HepG2 (cell line): ENCODE measurements at regions of chr3 and their contacts with region 1.

Region 1: DNA sequence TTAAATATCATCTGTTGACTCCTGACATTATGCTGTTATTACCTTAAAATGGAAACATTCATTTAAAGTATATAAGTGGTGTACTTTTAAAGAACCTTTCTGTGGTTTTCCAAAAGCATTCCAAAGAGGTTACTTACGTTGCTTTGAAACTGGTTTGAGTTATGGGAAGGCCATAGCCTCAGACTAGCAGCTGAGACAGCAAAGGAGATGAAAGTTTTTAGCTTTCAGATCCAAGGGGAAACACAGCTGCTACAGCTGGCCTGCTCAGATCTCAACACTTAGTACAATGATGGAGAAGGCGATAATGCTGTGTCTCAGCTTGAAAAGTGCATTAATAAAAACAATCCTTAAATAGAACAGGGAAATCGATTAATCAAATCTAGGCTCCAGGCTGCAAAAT is 921.1 kb downstream of the ROBO1 start:
- DNase-seq: no peak
- ATAC-seq: no peak
- H3K4me3 ChIP-seq: no peak overlapping the region
- H3K27ac ChIP-seq: peak overlapping the region; percentile 90
- H3K4me1 ChIP-seq: peaks cover 85% of the 10 kb centered on the region
- H3K27me3 ChIP-seq: no peaks in the 10 kb centered on the region
- CTCF ChIP-seq: no peak
- EP300 ChIP-seq: no peak; a peak in 1 of 4 replicates
- POLR2A ChIP-seq: no peak
- RAD21 ChIP-seq: no peak

Region 2: DNA sequence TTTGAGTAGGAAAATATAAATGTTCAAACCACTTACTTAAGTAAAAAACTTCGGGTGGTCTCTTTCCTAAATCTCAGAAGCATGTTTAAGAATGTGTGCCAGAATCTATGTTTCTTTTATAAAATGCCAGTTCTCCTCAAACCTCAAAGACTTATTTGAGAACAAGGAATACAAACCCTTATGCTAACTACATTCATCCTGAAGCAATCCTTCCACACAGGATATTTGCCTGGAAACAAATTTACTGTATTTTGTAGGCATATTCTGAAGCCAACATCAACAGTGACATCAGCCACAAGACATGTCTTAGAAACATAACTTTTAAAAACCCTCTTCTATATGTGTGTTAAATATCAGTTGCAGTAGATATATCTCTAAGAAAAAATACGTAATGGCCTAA is 156.0 kb before region 1 on chr3:
- CTCF ChIA-PET with region 1: no interaction called
- POLR2A ChIA-PET with region 1: no interaction called
- in situ Hi-C with region 1: no loop called
- intact Hi-C with region 1: no loop called
- DNase-seq: no peak
- ATAC-seq: no peak
- H3K4me3 ChIP-seq: no peak overlapping the region
- H3K27ac ChIP-seq: no peak overlapping the region
- H3K4me1 ChIP-seq: no peaks in the 10 kb centered on the region
- H3K27me3 ChIP-seq: no peaks in the 10 kb centered on the region
- CTCF ChIP-seq: no peak
- EP300 ChIP-seq: no peak
- POLR2A ChIP-seq: no peak
- RAD21 ChIP-seq: no peak

Region 3: GRCh38 chr3:78754066-78754743 is 92.5 kb before region 1 on chr3:
- CTCF ChIA-PET with region 1: no interaction called
- POLR2A ChIA-PET with region 1: no interaction called
- in situ Hi-C with region 1: no loop called
- intact Hi-C with region 1: loop called (anchors 5 kb)
- DNase-seq: peak; percentile 84
- ATAC-seq: peak; percentile 87
- H3K4me3 ChIP-seq: no peak overlapping the region; a peak in 1 of 6 replicates
- H3K27ac ChIP-seq: peak overlapping the region; percentile 23
- H3K4me1 ChIP-seq: peaks cover 26% of the 10 kb centered on the region
- H3K27me3 ChIP-seq: no peaks in the 10 kb centered on the region
- CTCF ChIP-seq: no peak
- EP300 ChIP-seq: no peak; a peak in 1 of 4 replicates
- POLR2A ChIP-seq: no peak
- RAD21 ChIP-seq: no peak

Region 4: GRCh38 chr3:78872195-78872594 is 25.5 kb after region 1 on chr3:
- CTCF ChIA-PET with region 1: no interaction called
- POLR2A ChIA-PET with region 1: interaction called, 12 read pairs
- in situ Hi-C with region 1: no loop called
- intact Hi-C with region 1: no loop called
- DNase-seq: peak; percentile 89
- ATAC-seq: peak; percentile 92
- H3K4me3 ChIP-seq: peak overlapping the region in 2 of 3 experiments; percentile 31 to 32; a peak in 2 of 6 replicates
- H3K27ac ChIP-seq: peak overlapping the region; percentile 72
- H3K4me1 ChIP-seq: peaks cover 83% of the 10 kb centered on the region
- H3K27me3 ChIP-seq: no peaks in the 10 kb centered on the region
- CTCF ChIP-seq: no peak
- EP300 ChIP-seq: peak in 1 of 2 experiments; percentile 82; a peak in 2 of 4 replicates
- POLR2A ChIP-seq: no peak
- RAD21 ChIP-seq: no peak

Region 5: DNA sequence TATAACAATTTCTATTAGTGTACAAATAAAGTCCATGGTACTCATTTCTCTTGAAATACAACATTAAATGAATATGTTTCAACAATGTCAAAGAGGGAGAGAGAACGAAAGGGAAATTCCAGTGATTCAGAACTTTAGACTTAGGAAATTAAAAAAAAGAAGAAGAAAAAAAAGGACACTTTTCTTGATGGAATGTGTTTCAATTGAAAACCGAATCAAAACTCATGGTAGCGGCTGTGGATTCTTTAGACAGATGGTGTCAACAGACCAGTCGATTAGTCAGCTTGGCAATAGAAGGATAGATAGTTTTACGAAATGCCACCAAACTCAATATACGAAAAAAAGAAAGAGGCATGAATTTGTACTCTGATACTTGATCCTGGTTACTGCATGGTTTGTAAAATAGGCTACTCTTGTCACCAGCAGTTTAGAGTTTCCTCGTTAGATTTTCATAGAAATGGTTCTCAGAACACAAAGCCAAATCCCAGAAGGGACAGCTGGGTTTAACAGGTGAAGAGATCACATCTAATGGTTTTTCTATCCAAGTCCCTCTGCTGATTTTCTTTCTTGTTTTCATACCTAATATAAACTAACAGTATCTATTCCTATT is 127.6 kb after region 1 on chr3:
- CTCF ChIA-PET with region 1: no interaction called
- POLR2A ChIA-PET with region 1: no interaction called
- in situ Hi-C with region 1: no loop called
- intact Hi-C with region 1: loop called (anchors 5 kb)
- DNase-seq: no peak
- ATAC-seq: no peak
- H3K4me3 ChIP-seq: no peak overlapping the region
- H3K27ac ChIP-seq: no peak overlapping the region
- H3K4me1 ChIP-seq: peaks cover 55% of the 10 kb centered on the region
- H3K27me3 ChIP-seq: no peaks in the 10 kb centered on the region
- CTCF ChIP-seq: no peak
- EP300 ChIP-seq: no peak
- POLR2A ChIP-seq: no peak
- RAD21 ChIP-seq: no peak

Region 6: DNA sequence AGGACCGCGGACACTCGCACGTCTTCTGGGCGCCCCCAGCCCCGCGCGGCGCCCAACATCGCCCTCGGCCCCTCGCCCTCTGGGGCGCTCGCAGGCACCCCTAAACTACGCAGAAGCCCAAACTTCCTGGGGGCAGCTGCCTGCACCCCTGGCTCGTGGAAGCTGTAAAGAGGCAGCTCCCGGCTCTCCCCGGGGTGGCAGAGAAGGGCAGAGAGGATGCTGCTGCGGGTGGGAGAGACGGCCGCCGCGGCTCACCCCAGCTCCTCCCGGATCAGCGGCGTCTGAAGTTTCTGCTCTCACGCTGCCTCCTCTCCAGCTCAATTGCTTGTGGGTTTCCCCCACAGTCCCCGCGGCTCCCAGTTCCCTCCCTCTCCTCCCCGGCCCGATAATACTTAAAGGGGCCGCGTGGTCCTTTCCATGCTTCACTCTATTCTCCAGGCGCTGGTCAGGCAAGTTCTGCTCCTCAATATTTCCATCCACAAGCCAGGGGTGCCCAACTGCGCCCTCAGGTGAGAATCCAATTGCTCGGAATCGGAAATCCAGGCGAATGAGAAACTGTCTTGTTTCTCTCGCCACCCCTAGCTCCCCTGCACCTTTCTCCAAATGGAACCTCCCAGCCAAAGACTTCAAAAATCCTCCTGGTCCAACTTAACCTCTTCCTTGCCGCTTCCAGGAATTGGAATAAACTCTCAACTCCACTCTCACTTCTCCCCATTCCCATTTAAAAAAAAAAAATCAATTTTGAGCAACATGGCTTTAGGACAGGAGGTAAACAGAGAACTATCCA is 172.6 kb after region 1 on chr3:
- CTCF ChIA-PET with region 1: no interaction called
- POLR2A ChIA-PET with region 1: interaction called, 3 read pairs
- in situ Hi-C with region 1: no loop called
- intact Hi-C with region 1: loop called (anchors 2 kb)
- DNase-seq: peak; percentile 84
- ATAC-seq: peak; percentile 89
- H3K4me3 ChIP-seq: peak overlapping the region; percentile 95 to 98 (median 95)
- H3K27ac ChIP-seq: peak overlapping the region; percentile 98
- H3K4me1 ChIP-seq: peaks cover 18% of the 10 kb centered on the region
- H3K27me3 ChIP-seq: no peaks in the 10 kb centered on the region; a peak in 1 of 5 replicates
- CTCF ChIP-seq: peak; percentile 53
- EP300 ChIP-seq: peak in 1 of 2 experiments; percentile 3; a peak in 1 of 4 replicates
- POLR2A ChIP-seq: peak; percentile 80 to 90
- RAD21 ChIP-seq: no peak